ENCODE measurements at regions of chr20 and their contacts with region 1.

Region 1: DNA sequence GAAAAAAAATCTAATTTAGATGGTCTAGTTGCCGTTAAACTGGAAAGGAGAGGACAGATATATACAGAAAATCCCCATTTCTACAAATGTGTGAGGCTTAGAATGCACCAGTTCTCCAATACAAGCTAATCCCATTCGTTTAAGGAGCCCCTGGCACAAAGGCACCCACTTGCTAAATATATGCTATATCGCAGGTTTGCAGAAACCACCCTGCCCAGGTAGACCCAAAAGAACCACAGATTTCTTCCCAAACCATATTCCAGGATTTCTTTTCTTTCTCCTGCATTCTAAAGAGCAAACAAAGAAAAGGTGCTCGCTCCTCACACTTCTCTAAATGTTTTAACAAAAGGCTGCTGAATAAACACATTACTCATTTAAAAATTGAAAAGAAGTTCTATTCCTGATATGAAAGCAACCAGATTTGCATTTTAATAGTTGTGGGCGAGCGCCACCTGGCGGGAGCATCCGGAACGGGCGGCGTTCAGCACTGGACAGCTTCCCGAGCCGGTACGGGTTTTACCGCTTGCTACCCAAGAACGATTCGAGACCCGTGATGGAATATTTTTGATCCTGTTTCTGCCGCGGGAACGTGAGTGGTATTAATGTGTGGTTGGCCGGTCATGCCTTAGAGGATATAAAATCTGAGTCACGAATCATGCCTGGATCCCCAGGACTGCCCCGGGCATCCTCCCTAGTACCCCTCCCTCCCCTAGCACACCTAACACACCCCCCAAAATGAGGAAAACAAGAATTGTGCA is 2.1 kb downstream of the PTPRT start:
- DNase-seq: peak; percentile 63 to 69
- ATAC-seq: peak; percentile 46 to 78; a peak in 4 of 6 replicates
- H3K4me3 ChIP-seq: no peak overlapping the region
- H3K27ac ChIP-seq: no peak overlapping the region
- H3K4me1 ChIP-seq: no peaks in the 10 kb centered on the region
- CTCF ChIP-seq: peak; percentile 86
- EP300 ChIP-seq: no peak
- POLR2A ChIP-seq: no peak
- RAD21 ChIP-seq: peak; percentile 85 to 87

Region 2: GRCh38 chr20:41738604-41739206 is 1449.0 kb before region 1 on chr20:
- CTCF ChIA-PET with region 1: interaction called, 33 read pairs
- POLR2A ChIA-PET with region 1: no interaction called
- DNase-seq: peak; percentile 29 to 52
- ATAC-seq: peak; percentile 92 to 95
- H3K4me3 ChIP-seq: no peak overlapping the region
- H3K27ac ChIP-seq: no peak overlapping the region
- H3K4me1 ChIP-seq: no peaks in the 10 kb centered on the region
- CTCF ChIP-seq: peak; percentile 77
- EP300 ChIP-seq: no peak
- POLR2A ChIP-seq: no peak
- RAD21 ChIP-seq: peak; percentile 73 to 84

Region 3: GRCh38 chr20:43165611-43166010 is 22.0 kb before region 1 on chr20:
- CTCF ChIA-PET with region 1: interaction called, 10 read pairs
- POLR2A ChIA-PET with region 1: no interaction called
- DNase-seq: no peak
- ATAC-seq: no peak
- H3K4me3 ChIP-seq: no peak overlapping the region
- H3K27ac ChIP-seq: no peak overlapping the region
- H3K4me1 ChIP-seq: no peaks in the 10 kb centered on the region
- CTCF ChIP-seq: no peak
- EP300 ChIP-seq: no peak
- POLR2A ChIP-seq: no peak
- RAD21 ChIP-seq: no peak

Measured in A549 (cell line).